ENCODE measurements at regions of chr16 and their contacts with region 1.

Region 1: DNA sequence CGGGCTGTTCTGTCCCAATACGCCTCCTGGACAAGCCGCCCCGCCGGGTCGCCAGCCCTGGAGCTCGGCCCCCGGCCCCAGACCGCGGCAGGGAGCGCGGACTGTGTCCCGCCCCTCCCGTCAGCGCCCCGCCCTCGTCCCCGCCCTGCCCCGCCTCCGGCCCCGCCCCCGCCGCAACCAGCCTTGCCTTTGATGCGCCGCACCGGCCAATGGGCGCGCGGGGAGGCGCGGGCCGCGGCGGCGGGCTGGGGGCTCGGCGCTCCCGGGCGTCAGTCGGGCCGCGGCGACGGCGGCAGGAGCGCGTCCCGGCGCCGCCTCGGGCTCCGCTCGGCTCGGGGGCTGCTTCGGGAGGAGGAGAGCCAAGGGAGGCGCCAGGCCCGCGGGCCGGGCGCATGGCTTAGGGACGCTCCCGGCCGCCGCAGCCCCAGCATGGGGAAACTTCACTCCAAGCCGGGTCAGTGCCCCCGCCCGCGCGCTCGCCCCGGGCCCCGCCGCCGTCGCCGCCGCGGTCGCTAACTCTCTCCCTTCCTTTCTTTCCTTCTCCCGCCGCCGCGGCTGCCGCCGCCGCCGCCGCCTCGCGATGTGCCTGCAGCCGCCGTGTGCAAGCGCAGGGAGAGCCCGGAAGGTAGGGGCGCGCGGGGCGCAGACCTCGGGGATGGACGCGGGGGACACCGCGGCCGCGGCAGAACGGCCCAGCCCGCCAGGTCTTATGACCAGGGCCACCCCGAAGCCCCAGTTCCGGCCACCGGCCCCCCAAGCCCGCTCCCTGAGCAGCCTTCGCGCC is at the start of gene NKD1:
- DNase-seq: peak; percentile 65
- H3K4me3 Mint-ChIP-seq: peak within 1 kb of the TSS; percentile 91
- H3K27ac Mint-ChIP-seq: peak within 1 kb of the TSS; percentile 59
- H3K4me1 Mint-ChIP-seq: peaks cover 14% of the 10 kb centered on the region
- H3K27me3 Mint-ChIP-seq: peaks cover 37% of the 10 kb centered on the region
- total RNA-seq, gene NKD1: 1.1 and 1.4 TPM in 2 replicates

Region 2: DNA sequence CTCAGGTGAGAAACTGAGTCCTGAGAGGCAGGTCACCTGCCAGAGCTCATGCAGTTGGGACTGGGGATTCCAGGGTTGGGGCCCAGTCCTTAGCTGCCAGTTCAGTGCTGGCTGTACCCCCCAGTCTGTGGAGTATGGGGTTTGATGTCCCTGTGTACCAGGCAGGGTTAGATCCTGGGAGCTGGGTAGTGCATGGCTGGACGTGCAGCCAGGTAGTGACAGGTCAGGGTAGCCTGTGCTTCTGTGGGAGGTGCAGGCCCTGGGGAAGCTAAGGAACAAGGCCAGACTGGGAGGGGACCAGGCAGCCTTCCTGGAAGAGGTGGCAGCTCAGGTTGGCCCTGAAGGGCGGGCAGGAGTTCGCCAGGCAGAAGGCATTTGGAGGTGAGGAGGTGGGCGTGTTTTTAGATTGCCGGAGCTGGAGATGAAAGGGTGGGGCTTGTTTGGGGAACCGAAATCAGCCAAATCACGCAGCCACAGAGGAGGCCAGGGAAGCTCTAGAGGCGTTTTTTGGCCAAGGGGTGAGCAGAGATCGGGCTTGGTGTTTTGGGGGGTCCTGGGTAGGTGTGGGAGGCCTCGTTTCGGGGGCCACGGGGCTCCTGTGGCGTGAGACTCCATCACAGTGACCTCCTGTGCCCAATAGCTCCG is 274.5 kb before region 1 on chr16:
- intact Hi-C with region 1: loop called (anchors 10 kb)
- DNase-seq: peak; percentile 20
- H3K4me3 Mint-ChIP-seq: peak overlapping the region; percentile 95
- H3K27ac Mint-ChIP-seq: peak overlapping the region; percentile 98
- H3K4me1 Mint-ChIP-seq: peaks cover 95% of the 10 kb centered on the region
- H3K27me3 Mint-ChIP-seq: no peaks in the 10 kb centered on the region

Region 3: GRCh38 chr16:50326949-50327402 is 221.3 kb before region 1 on chr16:
- intact Hi-C with region 1: loop called (anchors 5 kb)
- DNase-seq: peak; percentile 68
- H3K4me3 Mint-ChIP-seq: no peak overlapping the region
- H3K27ac Mint-ChIP-seq: no peak overlapping the region
- H3K4me1 Mint-ChIP-seq: peaks cover 45% of the 10 kb centered on the region
- H3K27me3 Mint-ChIP-seq: no peaks in the 10 kb centered on the region

Region 4: GRCh38 chr16:50593410-50594150 is 45.3 kb after region 1 on chr16:
- intact Hi-C with region 1: loop called (anchors 1 kb)
- DNase-seq: no peak
- H3K4me3 Mint-ChIP-seq: no peak overlapping the region
- H3K27ac Mint-ChIP-seq: no peak overlapping the region
- H3K4me1 Mint-ChIP-seq: peaks cover 17% of the 10 kb centered on the region
- H3K27me3 Mint-ChIP-seq: no peaks in the 10 kb centered on the region

Region 5: DNA sequence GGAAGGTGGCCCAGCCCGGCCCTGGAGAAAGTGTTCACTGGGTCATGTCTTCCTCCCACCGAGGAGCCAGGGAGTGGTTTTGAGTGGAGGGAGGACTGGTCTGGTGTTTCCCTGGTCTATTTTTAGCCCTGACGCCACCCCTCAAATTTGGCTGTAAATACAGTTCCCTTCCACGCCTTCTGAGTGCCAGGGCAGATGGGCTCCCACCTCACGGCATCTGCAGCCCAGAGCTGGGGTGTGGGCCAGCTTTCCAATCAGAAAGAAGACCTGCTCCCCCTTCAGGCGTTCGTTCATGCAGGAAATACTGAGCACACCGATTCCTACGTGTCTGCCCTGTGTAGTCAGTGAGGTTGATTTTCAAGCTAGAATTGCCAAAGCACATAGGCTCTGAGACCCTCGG is 79.1 kb after region 1 on chr16:
- intact Hi-C with region 1: loop called (anchors 1 kb)
- DNase-seq: peak; percentile 5
- H3K4me3 Mint-ChIP-seq: no peak overlapping the region
- H3K27ac Mint-ChIP-seq: no peak overlapping the region
- H3K4me1 Mint-ChIP-seq: peaks cover 14% of the 10 kb centered on the region
- H3K27me3 Mint-ChIP-seq: no peaks in the 10 kb centered on the region

Region 6: GRCh38 chr16:50681021-50681885 is 132.9 kb after region 1 on chr16 and contains the start of gene SNX20:
- intact Hi-C with region 1: loop called (anchors 1 kb)
- DNase-seq: peak; percentile 41
- H3K4me3 Mint-ChIP-seq: peak within 1 kb of the TSS; percentile 82
- H3K27ac Mint-ChIP-seq: peak within 1 kb of the TSS; percentile 85
- H3K4me1 Mint-ChIP-seq: peaks cover 90% of the 10 kb centered on the region
- H3K27me3 Mint-ChIP-seq: no peaks in the 10 kb centered on the region
- total RNA-seq, gene SNX20: 34.3 TPM in 2 replicates

Measured in activated T-helper 1 cell treated with anti-CD3 and anti-CD28 coated beads, Interleukin-12 subunit alpha, Interleukin-12 subunit beta, Interleukin-2, Interleukin-4 antibody, amounts not matched to agents 30 ng/mL and 10 ng/mL and 1 ng/mL, durations not matched to agents 14 hours and 24 hours and 36 hours (primary cell).